Ascending aorta (tissue), 2 donors: ENCODE measurements at regions of chr10 and their contacts with region 1.

Region 1: GRCh38 chr10:15427843-15428414 is 56.8 kb upstream of the FAM171A1 start:
- DNase-seq: no peak
- H3K4me3 ChIP-seq: no peak overlapping the region
- H3K27ac ChIP-seq: peak overlapping the region in 1 of 2 donors; percentile 17
- H3K4me1 ChIP-seq: peaks cover 0 to 8% of the 10 kb centered on the region in 2 donors
- H3K27me3 ChIP-seq: no peaks in the 10 kb centered on the region
- CTCF ChIP-seq: peak; percentile 54 to 64 (median 61)

Region 2: DNA sequence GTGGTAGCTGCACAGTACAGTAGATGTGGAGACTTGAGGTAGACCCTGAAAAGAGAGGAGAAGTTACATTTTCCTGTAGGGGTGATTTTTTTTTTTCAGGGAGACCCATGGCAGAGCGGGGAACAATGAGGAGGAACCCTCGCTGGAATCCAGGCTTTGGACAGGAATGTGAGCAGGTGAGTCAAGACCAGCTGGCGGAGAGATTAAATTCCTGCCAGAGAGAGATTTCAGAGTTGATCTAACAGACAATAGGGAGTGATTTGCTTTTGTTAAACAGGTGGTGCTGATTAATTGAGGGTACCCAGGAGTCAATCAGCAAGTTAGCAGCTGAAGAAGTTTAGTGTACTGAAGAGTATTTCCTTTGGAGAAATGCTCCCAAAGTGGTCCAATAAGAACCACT is 474.0 kb after region 1 on chr10:
- intact Hi-C with region 1: loop called (anchors 5 kb)
- DNase-seq: no peak
- H3K4me3 ChIP-seq: no peak overlapping the region
- H3K27ac ChIP-seq: no peak overlapping the region
- H3K4me1 ChIP-seq: no peaks in the 10 kb centered on the region
- H3K27me3 ChIP-seq: no peaks in the 10 kb centered on the region
- CTCF ChIP-seq: no peak

Region 3: DNA sequence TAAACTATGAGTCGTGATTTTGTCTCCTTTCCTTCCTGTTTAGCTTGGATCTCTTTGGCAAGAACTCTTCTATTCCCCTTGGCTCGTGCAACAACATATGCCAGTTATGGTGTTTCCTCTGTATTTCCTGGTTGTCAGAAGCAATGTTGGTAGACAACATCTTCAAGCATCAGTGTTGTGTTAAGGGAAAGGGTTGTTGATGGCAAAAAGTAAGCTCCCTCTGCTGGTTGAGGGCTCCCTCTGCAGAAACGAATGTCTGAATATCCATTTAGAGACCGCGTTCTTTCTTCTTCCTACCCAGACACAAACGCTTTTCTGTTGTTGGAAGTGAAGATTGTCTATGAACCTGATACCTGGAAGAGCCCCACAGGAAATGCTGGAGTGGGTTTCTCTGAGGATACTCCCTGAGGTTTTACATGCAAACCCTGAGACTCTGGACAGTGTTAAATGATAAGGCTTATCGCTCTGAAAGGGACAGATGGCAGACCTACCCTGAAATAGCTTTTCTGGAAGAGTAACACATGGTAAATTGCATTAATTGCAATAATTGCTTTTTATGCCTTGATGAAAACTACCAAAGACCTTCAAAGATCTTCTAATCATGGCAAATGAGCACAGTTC is 1117.3 kb after region 1 on chr10:
- intact Hi-C with region 1: loop called (anchors 10 kb)
- DNase-seq: no peak
- H3K4me3 ChIP-seq: no peak overlapping the region
- H3K27ac ChIP-seq: no peak overlapping the region
- H3K4me1 ChIP-seq: no peaks in the 10 kb centered on the region
- H3K27me3 ChIP-seq: no peaks in the 10 kb centered on the region
- CTCF ChIP-seq: peak in 2 of 3 experiments; percentile 31 to 50